ENCODE measurements at regions of chr15 and their contacts with region 1.

Region 1: DNA sequence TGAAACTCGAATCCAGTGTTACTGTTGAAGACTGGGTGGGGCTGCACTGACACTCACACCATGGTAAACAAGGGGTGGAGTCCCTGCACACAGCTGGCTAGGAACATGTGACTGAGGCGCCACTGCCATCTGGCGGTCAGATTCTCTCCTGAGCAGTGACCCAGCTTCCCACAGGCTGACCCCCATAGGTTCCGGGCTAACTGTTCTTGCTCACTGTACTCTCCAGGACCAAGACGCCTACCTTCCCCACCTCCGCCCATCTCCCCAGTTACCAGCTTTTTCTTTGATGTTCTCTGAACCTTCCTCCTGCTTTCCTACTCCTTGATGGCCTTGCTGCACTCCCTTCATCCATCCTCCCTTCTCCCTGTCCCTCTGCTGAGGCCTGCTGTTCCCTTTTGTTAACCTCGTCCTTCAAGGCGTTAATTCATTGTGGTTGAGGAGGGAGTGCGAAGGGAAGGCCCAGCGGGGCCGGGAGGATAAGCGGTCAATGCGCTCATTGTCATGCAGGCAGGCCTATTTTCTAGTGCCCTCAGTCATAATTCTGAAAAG is 115.2 kb downstream of the ATP8B4 start:
- DNase-seq: peak; percentile 50
- H3K4me3 ChIP-seq: no peak overlapping the region
- CTCF ChIP-seq: peak; percentile 76

Region 2: DNA sequence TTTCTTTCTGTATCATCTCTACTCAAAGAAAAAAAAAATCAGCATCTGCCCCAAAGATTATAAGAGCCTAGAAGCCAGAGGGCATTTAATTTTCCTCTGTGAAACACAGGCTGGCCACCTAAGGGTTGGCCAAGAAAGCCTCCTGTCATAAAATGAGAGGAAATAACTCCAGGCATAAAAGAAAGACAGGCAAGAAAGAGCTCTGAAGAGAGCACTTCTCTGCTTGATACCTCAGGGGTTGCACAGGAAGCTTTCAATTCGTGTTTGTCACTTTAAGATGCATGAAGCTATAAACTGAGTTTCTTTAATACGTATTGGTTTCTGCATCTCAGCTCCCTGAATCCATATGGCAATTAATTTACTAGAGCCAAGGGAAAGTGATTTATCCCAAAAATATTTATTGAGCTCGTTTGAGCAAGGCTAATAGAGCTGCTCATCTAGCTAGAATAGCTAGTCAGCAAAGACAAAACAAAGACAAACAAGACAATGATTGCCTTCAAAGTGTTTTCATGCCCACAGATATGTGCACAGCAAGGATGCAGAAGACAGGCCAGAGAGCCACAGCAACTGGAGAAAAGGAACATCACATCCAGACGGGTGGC is 79.7 kb after region 1 on chr15:
- in situ Hi-C with region 1: loop called (anchors 10 kb)
- DNase-seq: no peak
- H3K4me3 ChIP-seq: no peak overlapping the region
- CTCF ChIP-seq: no peak

Region 3: DNA sequence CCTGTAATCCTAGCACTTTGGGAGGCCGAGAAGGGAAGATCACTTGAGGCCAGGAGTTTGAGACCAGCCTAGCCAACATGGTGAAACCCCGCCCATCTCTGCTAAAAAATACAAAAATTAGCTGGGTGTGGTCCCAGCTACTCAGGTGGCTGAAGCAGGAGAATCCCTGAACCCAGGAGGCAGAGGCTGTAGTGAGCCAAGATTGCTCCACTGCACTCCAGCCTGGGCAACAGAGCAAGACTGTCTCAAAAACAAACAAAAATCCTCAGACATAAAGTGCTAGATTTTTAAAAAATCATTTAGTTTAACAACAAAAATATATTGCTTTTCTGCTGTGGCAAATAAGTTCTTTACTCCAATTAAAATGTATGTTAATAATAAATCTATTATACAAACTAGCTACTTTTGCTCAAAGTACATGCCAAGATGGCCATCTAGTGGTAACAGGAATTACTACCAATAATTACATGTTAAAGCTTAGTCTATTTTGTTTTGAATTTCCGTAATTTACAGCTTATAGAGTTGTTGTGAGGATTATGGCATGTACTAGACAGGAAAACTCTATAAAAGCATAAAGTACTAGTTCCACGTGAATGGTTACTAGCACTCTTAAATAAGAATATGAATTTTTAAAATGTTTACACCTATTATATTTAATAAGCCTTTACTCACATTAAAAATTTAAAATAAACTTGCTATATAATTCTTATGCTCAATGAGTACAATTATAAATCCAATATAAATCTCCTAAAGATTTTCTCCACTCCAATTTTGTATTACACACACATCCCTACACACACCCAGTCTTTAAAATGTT is 312.2 kb after region 1 on chr15:
- in situ Hi-C with region 1: no loop called
- DNase-seq: peak; percentile 42
- H3K4me3 ChIP-seq: no peak overlapping the region
- CTCF ChIP-seq: peak; percentile 26